Right ventricle myocardium inferior (tissue), 1 donor: ENCODE measurements at regions of chr3 and their contacts with region 1.

Region 1: GRCh38 chr3:186976837-186977750 is 46.8 kb downstream of the ST6GAL1 start:
- DNase-seq: peak; percentile 81
- ATAC-seq: peak; percentile 86

Region 2: DNA sequence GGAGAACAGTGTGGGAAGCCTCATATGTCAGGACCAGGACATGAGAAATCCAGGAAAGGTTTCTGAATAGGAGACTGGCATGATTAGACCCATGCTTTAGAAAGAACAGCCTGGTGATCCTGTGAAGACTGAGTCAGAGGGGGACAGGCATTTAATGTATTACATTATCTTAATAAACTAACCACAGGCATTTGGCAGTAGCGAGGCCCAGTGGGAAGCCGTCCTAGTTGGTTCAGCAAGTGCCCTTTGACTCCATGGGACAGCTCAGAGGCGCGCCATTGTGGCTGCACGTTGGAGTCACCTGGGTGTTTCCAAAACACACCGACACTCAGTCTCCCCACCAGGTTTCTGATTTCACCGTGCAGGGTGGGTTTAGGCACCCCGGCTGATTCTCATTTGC is 524.6 kb before region 1 on chr3:
- intact Hi-C with region 1: no loop called
- DNase-seq: no peak
- ATAC-seq: no peak

Region 3: DNA sequence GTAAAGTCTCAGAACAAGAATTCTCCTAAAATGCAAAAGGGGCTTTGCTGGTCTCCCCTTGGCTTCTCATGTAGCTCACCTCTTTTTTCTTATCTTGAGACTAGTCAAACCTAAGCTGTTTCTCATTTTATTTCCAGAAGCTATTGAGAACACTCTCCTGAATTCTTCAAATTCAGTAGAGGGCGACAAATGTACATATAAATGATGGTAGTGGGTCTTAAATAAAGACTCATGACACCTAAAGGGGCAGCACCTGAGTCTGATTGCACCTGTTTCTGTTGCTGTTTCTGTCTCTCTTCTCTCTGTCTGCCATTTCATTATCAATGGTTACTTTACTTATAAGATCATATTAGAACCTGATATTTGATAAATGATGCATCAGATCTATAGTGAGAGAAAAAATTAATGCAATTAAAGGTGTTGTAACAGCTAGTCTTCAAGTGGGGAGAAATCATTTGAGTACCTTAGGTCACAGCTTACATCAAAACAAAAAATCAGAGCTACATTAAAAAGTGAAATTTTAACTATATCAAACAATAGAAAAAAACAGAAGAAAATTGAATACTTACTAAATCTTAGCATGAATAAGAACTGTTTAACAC is 127.6 kb before region 1 on chr3:
- intact Hi-C with region 1: loop called (anchors 5 kb)
- DNase-seq: no peak
- ATAC-seq: peak; percentile 70

Region 4: DNA sequence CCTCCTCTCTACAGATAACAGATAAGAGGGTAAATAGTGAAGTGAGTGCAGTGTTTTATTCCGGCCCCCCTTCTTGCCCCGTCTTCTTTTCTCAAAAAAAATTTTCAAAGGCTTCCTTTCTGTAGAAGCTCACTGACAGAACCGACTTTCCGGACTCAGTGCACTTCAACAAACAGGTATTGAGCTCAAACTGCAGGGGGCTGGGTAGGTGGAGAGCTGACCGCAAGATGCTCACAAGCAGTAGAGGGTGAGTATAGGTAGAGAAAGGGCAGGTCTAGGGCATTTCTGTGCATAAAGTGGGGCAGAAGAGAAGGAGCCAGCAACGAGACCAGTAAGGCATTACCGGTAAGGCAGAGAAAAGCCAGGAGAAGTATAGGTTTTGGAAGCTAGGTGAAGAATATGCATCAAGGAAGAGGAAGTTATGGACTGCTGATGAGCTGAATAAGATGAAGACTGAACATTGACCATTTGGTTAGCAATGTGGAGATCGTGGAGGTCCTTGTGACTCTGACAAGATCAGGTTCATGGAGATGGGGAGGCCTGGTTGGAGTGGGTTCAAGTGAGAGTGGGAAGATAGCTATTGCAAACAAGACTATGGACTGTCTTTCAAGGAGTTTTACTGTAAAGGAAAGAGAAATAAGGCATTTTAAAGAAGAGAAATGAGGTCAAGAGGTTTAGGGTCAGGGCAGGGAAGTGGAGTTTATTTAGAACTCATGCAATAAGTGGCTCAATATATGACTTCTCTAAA is 50.6 kb after region 1 on chr3:
- intact Hi-C with region 1: no loop called
- DNase-seq: no peak
- ATAC-seq: no peak